Panc1 (cell line): ENCODE measurements at regions of chr9 and their contacts with region 1.

Region 1: GRCh38 chr9:125332527-125332926 is 70.9 kb downstream of the GAPVD1 start:
- DNase-seq: no peak
- ATAC-seq: no peak
- H3K4me3 ChIP-seq: no peak overlapping the region
- H3K27ac ChIP-seq: no peak overlapping the region
- H3K4me1 ChIP-seq: no peaks in the 10 kb centered on the region
- H3K27me3 ChIP-seq: no peaks in the 10 kb centered on the region
- CTCF ChIP-seq: no peak

Region 2: GRCh38 chr9:125284855-125285254 is 47.7 kb before region 1 on chr9:
- CTCF ChIA-PET with region 1: no interaction called
- POLR2A ChIA-PET with region 1: interaction called, 13 read pairs
- in situ Hi-C with region 1: no loop called
- intact Hi-C with region 1: no loop called
- DNase-seq: no peak
- ATAC-seq: peak; percentile 38; the same call in 1 of the 2 replicates
- H3K4me3 ChIP-seq: no peak overlapping the region
- H3K27ac ChIP-seq: 0 out of 2 replicates have a peak overlapping the region, but pooled peaks have one; percentile 29
- H3K4me1 ChIP-seq: peaks cover 5% of the 10 kb centered on the region; the same call in 1 of the 2 replicates
- H3K27me3 ChIP-seq: no peaks in the 10 kb centered on the region
- CTCF ChIP-seq: no peak

Region 3: GRCh38 chr9:125343518-125344275 is 11.2 kb after region 1 on chr9:
- CTCF ChIA-PET with region 1: no interaction called
- POLR2A ChIA-PET with region 1: no interaction called
- in situ Hi-C with region 1: no loop called
- intact Hi-C with region 1: no loop called
- DNase-seq: no peak
- ATAC-seq: peak; percentile 68; the same call in 1 of the 2 replicates
- H3K4me3 ChIP-seq: no peak overlapping the region
- H3K27ac ChIP-seq: no peak overlapping the region
- H3K4me1 ChIP-seq: peaks cover 7% of the 10 kb centered on the region; the same call in 1 of the 2 replicates
- H3K27me3 ChIP-seq: no peaks in the 10 kb centered on the region
- CTCF ChIP-seq: no peak

Region 4: DNA sequence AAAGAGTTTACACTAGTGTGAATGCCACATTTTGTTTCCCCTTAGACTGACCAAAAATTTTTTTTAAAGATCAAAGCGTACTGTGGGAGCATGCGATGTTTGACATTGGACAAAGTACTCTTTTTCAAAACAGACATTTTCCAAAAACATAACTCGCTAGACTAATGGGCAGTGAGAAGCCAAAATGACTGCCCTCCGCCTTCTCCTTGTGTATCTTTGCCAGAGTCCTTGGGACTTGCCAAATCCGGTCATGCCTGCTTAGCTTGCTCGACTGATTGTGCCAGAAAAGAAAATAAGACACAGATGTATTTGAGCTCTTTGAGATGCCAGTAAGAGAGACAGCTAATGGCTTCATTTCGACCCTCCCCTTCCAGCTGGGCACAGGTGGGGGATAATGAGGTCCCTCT is 216.9 kb after region 1 on chr9:
- CTCF ChIA-PET with region 1: no interaction called
- POLR2A ChIA-PET with region 1: no interaction called
- in situ Hi-C with region 1: no loop called
- intact Hi-C with region 1: no loop called
- DNase-seq: no peak
- ATAC-seq: no peak
- H3K4me3 ChIP-seq: no peak overlapping the region
- H3K27ac ChIP-seq: no peak overlapping the region
- H3K4me1 ChIP-seq: peaks cover 3% of the 10 kb centered on the region; the same call in 1 of the 2 replicates
- H3K27me3 ChIP-seq: no peaks in the 10 kb centered on the region
- CTCF ChIP-seq: no peak